Right ventricle myocardium superior (tissue), 1 donor: ENCODE measurements at regions of chr3 and their contacts with region 1.

Region 1: GRCh38 chr3:72996473-72997333 is at the start of gene PPP4R2:
- DNase-seq: peak; percentile 94
- ATAC-seq: peak; percentile 97
- total RNA-seq, gene PPP4R2: 58.6 TPM

Region 2: DNA sequence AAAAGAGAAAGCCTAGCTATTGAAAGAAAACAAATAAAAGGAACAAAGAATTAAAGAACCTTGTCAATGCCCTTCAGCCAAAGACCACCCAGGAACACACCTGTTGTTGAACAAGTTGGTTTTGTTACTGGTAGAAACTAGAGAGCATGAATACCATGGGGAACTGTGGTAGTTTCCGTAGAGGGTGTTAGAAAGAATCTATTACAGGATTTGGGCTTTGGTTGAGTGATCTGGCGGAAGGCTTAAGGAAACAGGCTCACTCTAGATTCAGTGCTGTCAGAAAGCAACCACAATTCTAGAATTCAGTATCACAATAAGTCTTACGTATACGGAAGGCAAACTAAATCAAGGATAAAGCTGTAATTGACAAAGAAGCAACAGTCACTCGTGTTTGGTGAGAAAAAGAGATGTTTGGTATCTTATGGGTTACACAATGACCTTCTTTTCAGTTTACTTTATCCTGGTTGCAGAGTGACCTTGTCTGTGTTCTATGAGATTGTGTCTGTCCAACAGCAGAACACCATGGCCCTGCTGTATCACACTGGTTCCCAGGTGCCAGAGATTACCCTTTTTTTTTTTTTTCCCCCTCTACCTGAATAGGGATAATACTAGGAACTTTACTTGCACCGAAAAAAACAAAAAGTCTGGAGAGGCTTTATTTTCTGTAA is 414.4 kb before region 1 on chr3:
- intact Hi-C with region 1: no loop called
- DNase-seq: no peak
- ATAC-seq: peak; percentile 55

Region 3: GRCh38 chr3:72821161-72821781 is 175.4 kb before region 1 on chr3:
- intact Hi-C with region 1: no loop called
- DNase-seq: no peak
- ATAC-seq: peak; percentile 94

Region 4: DNA sequence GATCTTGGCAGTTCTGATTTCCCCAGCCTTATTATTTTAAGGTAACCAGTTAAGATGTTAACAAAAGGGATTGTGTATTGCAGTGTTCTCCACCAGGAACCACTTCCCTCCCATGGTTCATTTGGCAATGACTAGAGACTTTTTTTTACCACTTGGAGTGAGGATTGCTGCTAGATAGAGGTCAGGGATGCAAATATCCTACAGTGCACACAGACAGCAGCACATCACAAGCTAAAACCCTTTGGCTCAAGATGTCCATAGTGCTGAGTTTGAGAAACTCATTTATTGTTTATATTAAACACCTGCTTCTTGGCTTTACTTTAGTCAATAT is 40.6 kb after region 1 on chr3:
- intact Hi-C with region 1: loop called (anchors 5 kb)
- DNase-seq: no peak
- ATAC-seq: peak; percentile 49

Region 5: GRCh38 chr3:73094125-73094524 is 97.4 kb after region 1 on chr3:
- intact Hi-C with region 1: no loop called
- DNase-seq: no peak
- ATAC-seq: no peak